Activated T-helper 2 cell treated with anti-CD3 and anti-CD28 coated beads, Interferon-gamma antibody, Interleukin-2, Interleukin-4, amounts not matched to agents 10 μg/mL and 5 μg/mL and 100 μg/mL, durations not matched to agents 14 hours and 24 hours and 36 hours (primary cell): ENCODE measurements at regions of chr14 and their contacts with region 1.

Region 1: GRCh38 chr14:76784266-76785264 is 23.3 kb downstream of the VASH1 start:
- DNase-seq: peak; percentile 43
- H3K4me3 Mint-ChIP-seq: no peak overlapping the region
- H3K27ac Mint-ChIP-seq: peak overlapping the region; percentile 3
- H3K4me1 Mint-ChIP-seq: peaks cover 32% of the 10 kb centered on the region
- H3K27me3 Mint-ChIP-seq: no peaks in the 10 kb centered on the region

Region 2: DNA sequence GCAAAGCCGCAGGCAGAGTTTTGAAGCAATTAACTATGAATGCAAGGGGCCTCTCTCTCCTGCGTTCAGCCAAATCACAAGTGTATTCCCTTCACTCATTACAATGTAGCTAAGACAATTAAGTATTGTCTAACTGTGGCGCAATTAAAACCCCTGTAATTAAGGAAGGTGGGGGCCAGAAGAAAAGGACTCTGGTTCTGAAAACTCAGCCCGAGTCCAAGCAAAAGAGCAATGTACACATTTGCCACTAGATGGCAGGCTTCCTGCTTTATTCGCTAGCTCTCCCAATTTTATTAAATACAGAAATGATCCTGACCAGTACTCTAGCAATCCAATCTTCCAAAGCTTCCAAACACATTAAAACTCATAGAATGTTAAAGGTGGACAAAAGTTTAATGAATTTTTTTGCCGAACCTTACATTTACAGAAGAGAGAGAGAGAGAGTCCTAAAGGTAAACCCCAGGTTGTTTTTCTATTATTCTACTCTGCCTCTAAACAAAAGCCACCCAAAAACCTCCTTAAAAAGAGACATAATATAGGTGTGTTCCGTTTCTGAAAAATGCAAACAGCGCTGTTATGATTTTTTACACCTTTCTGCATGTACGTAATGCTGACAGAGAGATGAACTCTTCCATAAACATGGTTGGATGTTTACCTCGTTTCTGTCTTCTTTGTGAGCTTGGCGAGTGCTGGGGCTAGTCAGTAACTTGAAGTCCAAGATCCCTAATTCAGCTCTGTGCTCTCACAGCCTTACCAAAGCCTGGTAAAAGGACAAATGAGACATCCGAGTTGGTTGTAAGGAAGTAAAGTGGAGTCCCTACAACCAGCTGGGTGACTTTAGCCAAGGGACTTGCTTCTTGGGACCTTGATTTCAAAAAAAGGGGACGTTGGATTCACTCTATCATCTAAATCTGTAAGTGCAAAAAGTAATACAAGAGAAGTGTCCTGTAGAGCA is 74.2 kb before region 1 on chr14:
- intact Hi-C with region 1: loop called (anchors 1 kb)
- DNase-seq: no peak
- H3K4me3 Mint-ChIP-seq: no peak overlapping the region
- H3K27ac Mint-ChIP-seq: no peak overlapping the region
- H3K4me1 Mint-ChIP-seq: no peaks in the 10 kb centered on the region
- H3K27me3 Mint-ChIP-seq: peaks cover under 1% of the 10 kb centered on the region

Region 3: GRCh38 chr14:76761136-76761959 is 23.2 kb before region 1 on chr14 and contains the start of gene VASH1:
- intact Hi-C with region 1: loop called (anchors 2 kb)
- DNase-seq: peak; percentile 64
- H3K4me3 Mint-ChIP-seq: peak within 1 kb of the TSS; percentile 84
- H3K27ac Mint-ChIP-seq: no peak within 1 kb of the TSS
- H3K4me1 Mint-ChIP-seq: peaks cover 8% of the 10 kb centered on the region
- H3K27me3 Mint-ChIP-seq: peaks cover 48% of the 10 kb centered on the region
- total RNA-seq, gene VASH1: 12.4 and 12.9 TPM in 2 replicates

Region 4: DNA sequence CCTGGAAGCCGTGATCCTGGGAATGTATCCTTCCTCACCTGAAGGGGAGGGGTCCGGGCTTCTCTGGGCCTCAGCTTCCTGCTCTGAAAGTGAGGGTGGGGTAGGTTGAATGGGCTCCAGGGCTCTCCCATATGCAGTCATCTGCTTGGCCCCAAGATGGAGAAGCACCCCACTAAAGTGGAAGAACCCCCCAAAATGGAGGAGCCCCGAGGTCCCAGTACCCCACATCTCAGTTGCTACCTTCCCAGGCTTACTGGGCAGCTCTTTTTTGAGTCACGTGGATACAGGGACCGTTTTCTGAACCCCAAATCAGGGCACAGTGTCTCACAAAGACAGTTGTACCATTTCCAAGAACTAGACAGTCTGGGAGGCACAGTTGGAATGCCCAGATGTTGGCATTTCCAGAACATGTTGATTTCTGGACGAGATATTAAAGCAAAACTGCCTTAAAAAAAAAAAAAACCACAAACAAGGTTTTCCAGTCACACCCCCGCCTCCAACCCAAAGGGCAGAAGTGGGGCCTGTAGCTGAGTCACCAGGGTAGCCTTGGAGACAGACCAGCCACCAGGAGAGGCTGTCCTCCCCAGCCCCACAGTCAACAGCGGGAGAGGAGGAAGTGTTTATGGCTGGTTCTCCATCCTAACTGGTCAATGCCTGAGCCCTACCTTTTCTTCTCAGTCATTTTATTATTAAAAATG is 11.2 kb before region 1 on chr14:
- intact Hi-C with region 1: no loop called
- DNase-seq: no peak
- H3K4me3 Mint-ChIP-seq: no peak overlapping the region
- H3K27ac Mint-ChIP-seq: no peak overlapping the region
- H3K4me1 Mint-ChIP-seq: peaks cover 26% of the 10 kb centered on the region
- H3K27me3 Mint-ChIP-seq: peaks cover 2% of the 10 kb centered on the region

Region 5: GRCh38 chr14:76829650-76830421 is 45.3 kb after region 1 on chr14:
- intact Hi-C with region 1: no loop called
- DNase-seq: no peak
- H3K4me3 Mint-ChIP-seq: no peak overlapping the region
- H3K27ac Mint-ChIP-seq: no peak overlapping the region
- H3K4me1 Mint-ChIP-seq: no peaks in the 10 kb centered on the region
- H3K27me3 Mint-ChIP-seq: peaks cover 12% of the 10 kb centered on the region